Activated CD4-positive, alpha-beta T cell treated with anti-CD3 and anti-CD28 coated beads for 36 hours (primary cell): ENCODE measurements at regions of chr6 and their contacts with region 1.

Region 1: DNA sequence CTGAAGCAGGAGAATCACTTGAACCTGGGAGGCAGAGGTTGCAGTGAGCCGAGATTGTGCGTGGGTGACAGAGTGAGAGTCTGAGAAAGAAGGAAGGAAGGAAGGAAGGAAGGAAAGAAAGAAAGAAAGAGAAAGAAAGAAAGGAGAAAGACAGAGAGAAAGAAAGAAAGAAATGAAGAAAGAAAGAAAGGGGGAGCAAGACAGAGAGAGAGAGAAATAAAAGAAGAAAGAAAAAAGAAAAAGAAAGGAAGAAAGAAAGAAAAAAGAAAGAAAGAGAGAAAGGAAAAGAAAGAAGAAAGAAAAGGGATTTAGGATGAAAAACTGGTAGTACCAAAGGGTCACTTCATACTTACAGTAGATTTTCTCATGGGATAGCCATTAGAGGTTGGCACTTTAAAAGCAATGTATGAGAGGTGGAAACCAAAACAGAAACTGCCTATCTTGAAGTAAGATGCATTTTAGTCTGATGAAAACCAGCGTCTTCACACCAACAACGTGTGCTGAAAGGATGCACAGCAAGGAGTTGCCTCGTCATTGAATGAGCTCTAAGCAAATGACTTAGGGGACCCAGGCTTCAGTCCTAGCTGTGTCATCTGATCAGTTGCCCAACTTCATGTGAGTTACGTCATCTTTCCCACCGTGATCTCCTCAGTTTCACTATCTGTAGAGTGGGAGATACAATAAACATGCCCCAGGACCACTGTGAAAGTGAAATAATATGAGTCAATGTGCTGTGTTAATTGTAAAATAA is 133.9 kb upstream of the NEDD9 start:
- DNase-seq: peak; percentile 72
- ATAC-seq: peak; percentile 65
- H3K4me3 Mint-ChIP-seq: peak overlapping the region; percentile 37
- H3K27ac Mint-ChIP-seq: peak overlapping the region; percentile 81
- H3K4me1 Mint-ChIP-seq: peaks cover 95% of the 10 kb centered on the region
- H3K27me3 Mint-ChIP-seq: no peaks in the 10 kb centered on the region

Region 2: DNA sequence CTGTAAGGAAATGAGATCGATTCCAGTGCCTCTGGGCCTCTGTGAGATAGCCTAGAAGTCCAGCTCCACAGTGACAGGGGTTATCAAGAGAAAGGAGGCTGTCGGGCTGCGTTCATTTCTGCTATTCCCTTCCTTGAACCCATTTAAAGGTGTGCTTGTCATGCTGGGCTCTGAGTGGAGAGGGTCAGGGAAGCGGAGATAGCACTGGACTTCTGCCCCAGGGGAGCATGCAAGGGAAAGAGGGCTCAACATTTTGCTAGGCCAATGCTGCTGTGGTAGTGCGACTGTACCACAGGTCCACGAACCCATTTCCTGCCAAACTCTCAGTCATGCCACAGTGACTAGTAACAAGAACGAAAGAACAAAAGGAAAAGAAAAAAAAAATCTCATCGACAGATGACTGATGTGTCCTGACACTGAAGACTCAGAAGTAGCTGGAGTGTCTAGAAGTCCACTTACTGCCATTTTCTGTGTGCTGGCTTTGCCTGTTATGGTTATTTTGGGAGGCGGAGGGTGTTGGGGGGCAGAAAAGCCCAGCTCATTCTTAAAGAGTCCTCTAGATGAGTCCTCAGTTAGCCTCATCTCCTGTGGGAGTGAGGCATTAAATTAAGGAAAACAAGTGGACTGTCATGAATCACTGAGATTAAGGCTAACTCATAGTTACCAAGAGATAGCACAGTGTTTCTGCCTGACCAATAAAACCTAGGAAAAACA is 141.9 kb before region 1 on chr6:
- CTCF ChIA-PET with region 1: no interaction called
- POLR2A ChIA-PET with region 1: no interaction called
- intact Hi-C with region 1: loop called in 1 of 2 experiments (anchors 2 kb)
- DNase-seq: peak; percentile 67
- ATAC-seq: peak; percentile 94
- H3K4me3 Mint-ChIP-seq: peak overlapping the region; percentile 10
- H3K27ac Mint-ChIP-seq: peak overlapping the region; percentile 75
- H3K4me1 Mint-ChIP-seq: peaks cover 51% of the 10 kb centered on the region
- H3K27me3 Mint-ChIP-seq: no peaks in the 10 kb centered on the region

Region 3: GRCh38 chr6:11263291-11263775 is 103.0 kb before region 1 on chr6:
- CTCF ChIA-PET with region 1: no interaction called
- POLR2A ChIA-PET with region 1: no interaction called
- intact Hi-C with region 1: no loop called
- DNase-seq: no peak
- ATAC-seq: no peak
- H3K4me3 Mint-ChIP-seq: no peak overlapping the region
- H3K27ac Mint-ChIP-seq: peak overlapping the region; percentile 56
- H3K4me1 Mint-ChIP-seq: peaks cover 41% of the 10 kb centered on the region
- H3K27me3 Mint-ChIP-seq: no peaks in the 10 kb centered on the region

Region 4: GRCh38 chr6:11317885-11318771 is 48.2 kb before region 1 on chr6:
- CTCF ChIA-PET with region 1: interaction called, 3 read pairs
- POLR2A ChIA-PET with region 1: interaction called, 6 read pairs
- intact Hi-C with region 1: loop called (anchors 1 kb)
- DNase-seq: peak; percentile 87
- ATAC-seq: peak; percentile 93
- H3K4me3 Mint-ChIP-seq: no peak overlapping the region
- H3K27ac Mint-ChIP-seq: peak overlapping the region; percentile 85
- H3K4me1 Mint-ChIP-seq: peaks cover 53% of the 10 kb centered on the region
- H3K27me3 Mint-ChIP-seq: no peaks in the 10 kb centered on the region

Region 5: DNA sequence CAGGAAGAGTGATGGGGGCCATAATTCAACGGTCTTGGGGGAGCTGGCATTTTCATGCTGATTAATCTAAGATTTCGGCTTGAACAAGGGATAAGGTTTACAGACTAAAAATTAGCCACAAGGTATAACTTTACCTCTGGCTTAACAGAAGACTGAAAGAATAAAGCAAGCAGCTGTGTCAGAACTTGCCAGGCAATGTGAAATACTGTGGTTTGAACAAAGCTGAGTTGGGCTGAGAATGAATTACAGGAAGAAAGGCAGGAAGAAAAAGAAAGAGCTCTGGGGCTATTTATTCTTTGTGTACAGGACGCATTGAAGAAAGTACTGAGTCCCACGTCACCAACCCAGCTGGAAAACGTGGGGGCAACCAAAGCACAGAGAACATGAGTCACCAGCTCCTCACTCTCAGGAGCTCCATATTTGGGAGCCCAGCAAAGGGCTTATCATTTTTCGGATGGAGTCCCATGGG is 12.4 kb before region 1 on chr6:
- CTCF ChIA-PET with region 1: interaction called, 15 read pairs
- POLR2A ChIA-PET with region 1: interaction called, 14 read pairs
- intact Hi-C with region 1: loop called (anchors 1 kb)
- DNase-seq: peak; percentile 90
- ATAC-seq: peak; percentile 92
- H3K4me3 Mint-ChIP-seq: peak overlapping the region; percentile 53
- H3K27ac Mint-ChIP-seq: peak overlapping the region; percentile 90
- H3K4me1 Mint-ChIP-seq: peaks cover 80% of the 10 kb centered on the region
- H3K27me3 Mint-ChIP-seq: no peaks in the 10 kb centered on the region

Region 6: DNA sequence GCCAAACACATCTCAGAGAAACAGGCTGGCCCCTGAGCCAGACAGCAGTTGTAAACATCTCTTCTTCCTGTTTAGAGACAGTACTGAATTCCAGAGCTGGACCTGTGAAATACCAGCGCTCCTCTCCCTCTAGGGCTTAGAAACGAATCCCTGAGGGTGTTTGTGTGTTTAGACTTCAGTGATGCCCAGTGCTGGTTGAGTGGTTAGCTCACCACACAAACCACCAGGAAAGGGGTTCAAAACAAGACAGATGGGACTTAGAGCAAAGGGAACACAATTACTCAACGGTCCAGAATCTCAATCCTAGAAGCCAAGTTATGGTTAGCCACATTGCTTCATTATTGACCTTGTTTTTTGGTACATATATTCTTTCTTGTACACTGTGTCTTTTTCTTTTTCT is 62.5 kb after region 1 on chr6:
- CTCF ChIA-PET with region 1: no interaction called
- POLR2A ChIA-PET with region 1: no interaction called
- intact Hi-C with region 1: no loop called
- DNase-seq: no peak
- ATAC-seq: no peak
- H3K4me3 Mint-ChIP-seq: no peak overlapping the region
- H3K27ac Mint-ChIP-seq: no peak overlapping the region
- H3K4me1 Mint-ChIP-seq: peaks cover 33% of the 10 kb centered on the region
- H3K27me3 Mint-ChIP-seq: no peaks in the 10 kb centered on the region

Region 7: GRCh38 chr6:11445146-11445545 is 78.8 kb after region 1 on chr6:
- CTCF ChIA-PET with region 1: no interaction called
- POLR2A ChIA-PET with region 1: no interaction called
- intact Hi-C with region 1: loop called in 1 of 2 experiments (anchors 5 kb)
- DNase-seq: no peak
- ATAC-seq: no peak
- H3K4me3 Mint-ChIP-seq: no peak overlapping the region
- H3K27ac Mint-ChIP-seq: no peak overlapping the region
- H3K4me1 Mint-ChIP-seq: peaks cover 29% of the 10 kb centered on the region
- H3K27me3 Mint-ChIP-seq: peaks cover 2% of the 10 kb centered on the region

Region 8: GRCh38 chr6:12011276-12012076 is 645.1 kb after region 1 on chr6:
- CTCF ChIA-PET with region 1: no interaction called
- POLR2A ChIA-PET with region 1: no interaction called
- intact Hi-C with region 1: loop called in 1 of 2 experiments (anchors 5 kb)
- DNase-seq: peak; percentile 99
- ATAC-seq: peak; percentile 77
- H3K4me3 Mint-ChIP-seq: peak overlapping the region; percentile 96
- H3K27ac Mint-ChIP-seq: peak overlapping the region; percentile 98
- H3K4me1 Mint-ChIP-seq: peaks cover 39% of the 10 kb centered on the region
- H3K27me3 Mint-ChIP-seq: no peaks in the 10 kb centered on the region